Breast epithelium (tissue), 4 donors: ENCODE measurements at regions of chr11 and their contacts with region 1.

Region 1: GRCh38 chr11:106594751-106595351 is 423.4 kb downstream of the GUCY1A2 start:
- DNase-seq: no peak
- H3K4me3 ChIP-seq: no peak overlapping the region
- H3K27ac ChIP-seq: no peak overlapping the region
- H3K4me1 ChIP-seq: no peaks in the 10 kb centered on the region
- H3K27me3 ChIP-seq: no peaks in the 10 kb centered on the region
- CTCF ChIP-seq: no peak
- POLR2A ChIP-seq: no peak

Region 2: DNA sequence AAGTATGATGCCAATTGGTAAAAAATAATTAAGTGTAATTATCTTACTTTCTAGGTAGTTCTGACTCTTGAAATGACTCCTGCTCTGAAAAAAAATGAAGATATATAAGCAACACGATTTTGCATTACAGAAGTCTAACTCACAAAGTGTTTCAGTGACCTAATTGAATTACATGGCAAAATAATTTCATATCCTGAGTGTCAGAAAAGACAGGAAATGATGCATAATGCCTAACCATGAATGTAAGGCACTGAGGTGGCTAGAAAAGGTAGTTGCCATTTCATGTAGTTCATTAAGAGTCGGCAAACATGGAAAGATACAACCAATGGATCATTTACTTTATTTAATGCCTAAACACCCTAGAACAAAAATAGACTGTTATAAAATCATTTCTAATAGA is 310.0 kb after region 1 on chr11:
- intact Hi-C with region 1: no loop called
- DNase-seq: no peak
- H3K4me3 ChIP-seq: no peak overlapping the region
- H3K27ac ChIP-seq: no peak overlapping the region
- H3K4me1 ChIP-seq: no peaks in the 10 kb centered on the region
- H3K27me3 ChIP-seq: no peaks in the 10 kb centered on the region
- CTCF ChIP-seq: no peak
- POLR2A ChIP-seq: no peak

Region 3: DNA sequence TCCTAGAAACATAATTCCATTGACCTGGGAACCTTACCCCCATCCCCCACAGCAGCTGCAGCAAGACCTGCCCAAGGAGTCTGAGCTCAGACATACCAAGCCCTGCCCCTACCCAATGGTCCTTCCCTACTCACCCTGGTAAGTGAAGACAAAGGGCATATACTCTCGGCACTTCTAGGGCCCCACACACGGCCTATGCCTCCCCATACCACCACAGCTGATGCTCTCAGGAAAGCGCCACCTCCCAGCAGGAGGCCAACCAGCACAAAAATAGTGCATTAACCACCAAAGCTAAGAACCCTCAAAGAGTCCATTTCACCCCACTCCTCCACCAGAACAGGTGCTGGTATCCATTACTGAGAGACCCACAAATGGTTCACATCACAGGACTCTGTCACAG is 497.8 kb after region 1 on chr11:
- intact Hi-C with region 1: loop called (anchors 5 kb)
- DNase-seq: no peak
- H3K4me3 ChIP-seq: no peak overlapping the region
- H3K27ac ChIP-seq: no peak overlapping the region
- H3K4me1 ChIP-seq: no peaks in the 10 kb centered on the region
- H3K27me3 ChIP-seq: no peaks in the 10 kb centered on the region
- CTCF ChIP-seq: no peak
- POLR2A ChIP-seq: no peak